Posterior vena cava (tissue), 2 donors: ENCODE measurements at regions of chr14 and their contacts with region 1.

Region 1: DNA sequence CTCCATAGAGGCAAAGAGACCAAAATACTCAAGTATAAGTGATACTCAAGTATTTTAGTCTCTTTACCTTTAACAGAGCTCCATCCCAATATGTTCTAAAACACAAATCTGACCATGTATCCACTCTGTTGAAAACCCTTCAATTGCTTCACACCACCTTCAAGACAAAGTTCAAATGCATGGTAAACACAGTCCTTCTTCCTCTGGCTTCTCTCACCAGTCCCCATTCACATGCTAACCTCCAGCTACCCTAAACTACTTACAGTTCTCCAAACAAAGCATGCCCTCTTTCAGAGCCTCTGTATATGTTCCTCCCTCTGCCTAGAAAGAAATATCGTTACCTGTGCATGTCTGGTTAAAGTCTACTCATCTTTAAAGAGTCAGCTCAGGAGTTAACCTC is 100.2 kb downstream of the NUMB start:
- DNase-seq: no peak

Region 2: DNA sequence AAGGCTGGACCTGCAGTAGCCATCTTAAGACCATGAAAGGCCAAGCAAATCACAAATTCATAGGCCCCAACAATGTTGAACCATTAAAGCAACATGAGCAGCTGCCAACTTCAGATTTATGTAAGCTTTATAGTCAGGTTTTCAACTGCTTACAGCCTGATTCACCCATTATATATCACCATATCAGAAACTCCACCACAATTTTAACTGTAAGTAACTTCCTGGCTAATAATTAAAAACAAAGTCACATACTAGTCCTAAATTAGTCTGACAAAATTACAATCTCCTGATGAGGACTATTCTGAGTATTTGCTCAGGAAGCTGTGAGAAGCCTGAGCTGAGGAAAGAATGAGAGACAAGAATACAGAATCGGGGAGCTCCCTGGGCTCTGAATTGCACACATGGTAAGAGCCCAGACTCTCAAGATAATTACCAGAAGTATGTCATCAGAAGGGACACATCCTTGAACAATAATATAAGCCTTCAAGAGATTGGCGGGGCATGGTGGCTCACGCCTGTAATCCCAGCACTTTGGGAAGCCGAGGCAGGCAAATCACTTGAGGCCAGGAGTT is 45.1 kb after region 1 on chr14:
- intact Hi-C with region 1: loop called in 1 of 2 experiments (anchors 1 kb)
- DNase-seq: no peak